Activated CD4-positive, alpha-beta memory T cell treated with anti-CD3 and anti-CD28 coated beads for 36 hours (primary cell): ENCODE measurements at regions of chr13 and their contacts with region 1.

Region 1: GRCh38 chr13:77026818-77027585 is at the start of gene FBXL3:
- DNase-seq: peak; percentile 89
- H3K4me3 Mint-ChIP-seq: peak within 1 kb of the TSS; percentile 99
- H3K27ac Mint-ChIP-seq: peak within 1 kb of the TSS; percentile 96
- H3K4me1 Mint-ChIP-seq: peaks cover 41% of the 10 kb centered on the region
- H3K27me3 Mint-ChIP-seq: no peaks in the 10 kb centered on the region
- total RNA-seq, gene FBXL3: 35.6 to 35.7 TPM

Region 2: DNA sequence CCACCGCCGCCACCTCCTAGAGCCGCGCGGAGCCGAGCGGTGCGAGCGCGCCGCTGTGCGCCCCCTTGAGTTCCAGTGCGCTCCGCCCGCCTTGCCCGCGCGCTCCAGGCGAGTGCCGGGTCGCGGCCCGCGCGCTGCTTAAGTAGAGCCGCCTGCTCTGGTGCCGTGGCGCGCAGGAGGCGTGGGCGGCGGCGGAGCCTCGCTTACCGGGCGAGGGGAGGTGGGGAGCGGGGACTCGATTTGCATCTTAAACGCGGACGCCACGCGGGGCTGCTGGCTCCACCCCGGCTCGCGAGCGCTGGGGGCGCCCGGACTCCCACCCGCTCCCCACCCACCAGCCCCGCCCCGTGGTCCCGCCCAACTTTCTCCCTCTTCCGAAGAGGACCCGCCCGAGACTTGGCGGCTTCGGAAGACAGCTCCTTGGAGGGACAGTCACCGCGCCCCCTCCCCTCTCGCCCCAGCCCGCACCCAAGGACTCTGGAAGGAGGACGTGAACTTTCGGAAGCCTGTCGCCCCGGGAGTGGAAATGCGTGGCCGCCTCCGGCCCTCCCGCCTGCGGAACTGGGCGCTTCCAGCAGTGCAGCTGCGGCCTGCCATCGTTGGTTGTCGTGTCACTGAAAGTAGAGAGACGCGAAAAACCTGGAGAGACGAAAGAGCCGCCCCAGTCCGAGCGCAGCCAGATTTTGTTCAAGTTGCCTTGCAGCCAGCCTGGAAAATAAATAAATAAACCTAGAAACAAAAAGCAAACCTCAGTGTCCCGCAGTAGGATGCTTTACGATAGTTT is 140.5 kb before region 1 on chr13 and contains the start of gene KCTD12:
- CTCF ChIA-PET with region 1: no interaction called
- POLR2A ChIA-PET with region 1: interaction called, 5 read pairs
- intact Hi-C with region 1: loop called (anchors 2 kb)
- DNase-seq: peak; percentile 77
- H3K4me3 Mint-ChIP-seq: peak within 1 kb of the TSS; percentile 84
- H3K27ac Mint-ChIP-seq: peak within 1 kb of the TSS; percentile 50
- H3K4me1 Mint-ChIP-seq: peaks cover 30% of the 10 kb centered on the region
- H3K27me3 Mint-ChIP-seq: peaks cover 12% of the 10 kb centered on the region
- total RNA-seq, gene KCTD12: 6.1 to 6.7 TPM

Region 3: DNA sequence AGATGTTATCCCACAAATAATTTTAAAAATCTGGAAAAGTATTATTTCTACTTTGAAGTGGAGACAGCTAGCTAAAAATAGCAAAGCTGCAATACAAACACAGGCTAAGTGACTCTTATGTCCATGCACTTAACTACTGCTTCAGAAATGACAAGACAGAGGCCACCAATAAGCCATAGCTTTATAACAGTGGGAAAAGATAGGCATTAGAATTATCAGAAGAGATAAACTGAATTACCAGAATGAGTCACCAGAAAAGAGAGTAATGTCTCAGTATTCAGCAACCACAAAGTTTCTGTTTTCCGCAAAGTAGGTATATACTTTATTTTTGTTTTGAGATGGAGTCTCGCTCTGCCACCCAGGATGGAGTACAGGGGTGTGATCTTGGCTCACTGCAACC is 18.0 kb before region 1 on chr13:
- CTCF ChIA-PET with region 1: interaction called, 3 read pairs
- POLR2A ChIA-PET with region 1: interaction called, 29 read pairs
- intact Hi-C with region 1: loop called (anchors 1 kb)
- DNase-seq: peak; percentile 28
- H3K4me3 Mint-ChIP-seq: no peak overlapping the region
- H3K27ac Mint-ChIP-seq: peak overlapping the region; percentile 64
- H3K4me1 Mint-ChIP-seq: peaks cover 41% of the 10 kb centered on the region
- H3K27me3 Mint-ChIP-seq: no peaks in the 10 kb centered on the region

Region 4: DNA sequence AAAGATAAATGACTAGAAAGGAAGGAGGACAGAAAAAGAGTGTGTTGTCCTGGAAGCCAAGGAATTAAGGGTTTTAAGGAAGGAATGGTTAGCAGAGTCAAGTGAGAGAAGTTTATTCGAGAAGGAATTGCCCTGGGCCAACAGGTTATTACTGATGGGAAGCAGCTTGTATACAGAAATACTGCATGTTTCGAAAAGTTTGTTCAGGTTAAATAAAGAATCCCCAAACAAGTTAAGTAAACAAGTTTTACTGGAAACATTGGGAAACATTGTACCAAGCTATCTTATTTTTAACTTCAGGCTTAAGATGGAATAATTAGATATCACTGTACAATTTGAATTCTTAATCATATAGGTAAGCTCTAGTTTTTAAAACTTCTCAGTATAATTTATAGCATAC is 28.2 kb after region 1 on chr13:
- CTCF ChIA-PET with region 1: no interaction called
- POLR2A ChIA-PET with region 1: no interaction called
- intact Hi-C with region 1: no loop called
- DNase-seq: no peak
- H3K4me3 Mint-ChIP-seq: no peak overlapping the region
- H3K27ac Mint-ChIP-seq: no peak overlapping the region
- H3K4me1 Mint-ChIP-seq: no peaks in the 10 kb centered on the region
- H3K27me3 Mint-ChIP-seq: no peaks in the 10 kb centered on the region

Region 5: DNA sequence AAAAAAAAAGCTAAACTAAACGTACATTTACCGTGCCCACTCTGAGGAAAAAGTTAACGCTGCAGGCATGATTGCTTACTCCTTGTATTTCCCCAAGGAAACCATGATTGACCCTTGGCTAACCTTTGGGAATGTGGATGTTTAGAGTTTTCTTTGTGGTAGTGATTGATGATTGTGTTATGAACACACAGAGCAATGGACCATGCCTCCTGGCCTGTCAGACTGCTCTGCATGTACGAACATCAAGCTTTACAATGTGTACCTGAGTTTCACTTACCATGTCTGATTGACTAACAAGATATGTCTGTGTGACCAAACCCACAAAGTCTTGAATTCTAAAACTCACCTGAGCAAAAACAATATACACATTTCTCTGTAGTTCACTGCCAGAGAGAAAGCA is 264.8 kb after region 1 on chr13:
- CTCF ChIA-PET with region 1: no interaction called
- POLR2A ChIA-PET with region 1: interaction called, 3 read pairs
- intact Hi-C with region 1: loop called (anchors 1 kb)
- DNase-seq: no peak
- H3K4me3 Mint-ChIP-seq: no peak overlapping the region
- H3K27ac Mint-ChIP-seq: peak overlapping the region; percentile 42
- H3K4me1 Mint-ChIP-seq: peaks cover 39% of the 10 kb centered on the region
- H3K27me3 Mint-ChIP-seq: no peaks in the 10 kb centered on the region

Region 6: GRCh38 chr13:77386880-77387606 is 360.0 kb after region 1 on chr13:
- CTCF ChIA-PET with region 1: no interaction called
- POLR2A ChIA-PET with region 1: no interaction called
- intact Hi-C with region 1: loop called (anchors 5 kb)
- DNase-seq: no peak
- H3K4me3 Mint-ChIP-seq: no peak overlapping the region
- H3K27ac Mint-ChIP-seq: no peak overlapping the region
- H3K4me1 Mint-ChIP-seq: peaks cover 16% of the 10 kb centered on the region
- H3K27me3 Mint-ChIP-seq: peaks cover 1% of the 10 kb centered on the region

Region 7: GRCh38 chr13:77697217-77698103 is 670.5 kb after region 1 on chr13 and contains the start of gene SLAIN1:
- CTCF ChIA-PET with region 1: no interaction called
- POLR2A ChIA-PET with region 1: no interaction called
- intact Hi-C with region 1: loop called (anchors 1 kb)
- DNase-seq: peak; percentile 85
- H3K4me3 Mint-ChIP-seq: peak within 1 kb of the TSS; percentile 92
- H3K27ac Mint-ChIP-seq: peak within 1 kb of the TSS; percentile 49
- H3K4me1 Mint-ChIP-seq: peaks cover 32% of the 10 kb centered on the region
- H3K27me3 Mint-ChIP-seq: no peaks in the 10 kb centered on the region
- total RNA-seq, gene SLAIN1: 21.8 to 25.8 TPM